Activated CD8-positive, alpha-beta T cell treated with anti-CD3 and anti-CD28 coated beads for 36 hours (primary cell): ENCODE measurements at regions of chr19 and their contacts with region 1.

Region 1: DNA sequence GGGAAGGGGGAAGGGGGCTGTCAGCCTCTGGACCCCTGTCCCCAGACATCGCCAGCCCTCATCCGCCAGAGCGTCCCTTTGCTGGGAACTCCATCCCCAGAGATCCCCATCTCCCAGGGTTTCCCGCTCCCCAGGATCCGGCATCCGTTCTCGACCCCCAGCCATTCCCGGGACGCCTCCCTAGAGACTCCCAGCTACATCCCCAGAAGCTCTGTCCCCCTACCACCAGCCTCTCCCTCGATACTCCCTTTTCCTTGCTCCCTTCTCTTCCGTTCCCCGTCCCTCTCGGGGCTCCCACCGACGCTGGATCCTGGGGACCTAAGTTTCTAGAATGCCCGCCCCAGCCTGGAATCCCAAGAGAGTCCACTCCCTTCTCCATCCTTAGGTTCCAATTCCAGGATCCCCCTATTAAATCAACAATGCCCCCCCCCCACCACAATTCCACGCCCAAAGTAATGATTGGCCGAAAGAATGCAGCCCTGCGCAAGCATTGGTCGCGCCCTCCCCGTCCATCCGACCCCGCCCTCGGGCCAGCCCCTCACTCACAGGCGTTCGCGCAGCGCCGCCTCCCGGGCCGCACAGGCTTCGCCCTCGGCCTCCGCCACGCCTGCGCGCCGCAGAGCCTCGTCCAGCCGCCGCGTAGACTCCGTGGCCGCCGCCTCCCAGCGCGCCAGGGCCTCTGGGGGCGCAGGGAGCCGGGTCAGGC is 3.2 kb downstream of the CCDC194 start:
- DNase-seq: peak; percentile 95
- ATAC-seq: peak; percentile 99
- H3K4me3 Mint-ChIP-seq: peak overlapping the region; percentile 81
- H3K27ac Mint-ChIP-seq: no peak overlapping the region
- H3K4me1 Mint-ChIP-seq: peaks cover 17% of the 10 kb centered on the region
- H3K27me3 Mint-ChIP-seq: peaks cover 5% of the 10 kb centered on the region
- CTCF ChIP-seq: peak; percentile 78

Region 2: GRCh38 chr19:17260842-17261325 is 129.9 kb before region 1 on chr19:
- CTCF ChIA-PET with region 1: interaction called, 13 read pairs
- POLR2A ChIA-PET with region 1: interaction called, 3 read pairs
- intact Hi-C with region 1: no loop called
- DNase-seq: peak; percentile 94
- ATAC-seq: peak; percentile 100
- H3K4me3 Mint-ChIP-seq: no peak overlapping the region
- H3K27ac Mint-ChIP-seq: no peak overlapping the region
- H3K4me1 Mint-ChIP-seq: peaks cover 8% of the 10 kb centered on the region
- H3K27me3 Mint-ChIP-seq: no peaks in the 10 kb centered on the region
- CTCF ChIP-seq: peak; percentile 84

Region 3: GRCh38 chr19:17346109-17346671 is 44.6 kb before region 1 on chr19:
- CTCF ChIA-PET with region 1: interaction called, 18 read pairs
- POLR2A ChIA-PET with region 1: interaction called, 3 read pairs
- intact Hi-C with region 1: loop called (anchors 5 kb)
- DNase-seq: peak; percentile 88
- ATAC-seq: peak; percentile 100
- H3K4me3 Mint-ChIP-seq: no peak overlapping the region
- H3K27ac Mint-ChIP-seq: no peak overlapping the region
- H3K4me1 Mint-ChIP-seq: peaks cover 2% of the 10 kb centered on the region
- H3K27me3 Mint-ChIP-seq: peaks cover 17% of the 10 kb centered on the region
- CTCF ChIP-seq: peak; percentile 95

Region 4: GRCh38 chr19:17405250-17406038 is 14.6 kb after region 1 on chr19 and contains the start of gene BST2:
- CTCF ChIA-PET with region 1: interaction called, 8 read pairs
- POLR2A ChIA-PET with region 1: interaction called, 12 read pairs
- intact Hi-C with region 1: no loop called
- DNase-seq: peak; percentile 72
- ATAC-seq: peak; percentile 77
- H3K4me3 Mint-ChIP-seq: peak within 1 kb of the TSS; percentile 95
- H3K27ac Mint-ChIP-seq: peak within 1 kb of the TSS; percentile 97
- H3K4me1 Mint-ChIP-seq: peaks cover 29% of the 10 kb centered on the region
- H3K27me3 Mint-ChIP-seq: no peaks in the 10 kb centered on the region
- CTCF ChIP-seq: no peak
- total RNA-seq, gene BST2: 89.7 to 98.4 TPM

Region 5: GRCh38 chr19:17469481-17470067 is 78.8 kb after region 1 on chr19:
- CTCF ChIA-PET with region 1: interaction called, 17 read pairs
- POLR2A ChIA-PET with region 1: interaction called, 4 read pairs
- intact Hi-C with region 1: no loop called
- DNase-seq: peak; percentile 96
- ATAC-seq: peak; percentile 86
- H3K4me3 Mint-ChIP-seq: peak overlapping the region; percentile 92
- H3K27ac Mint-ChIP-seq: peak overlapping the region; percentile 94
- H3K4me1 Mint-ChIP-seq: peaks cover 31% of the 10 kb centered on the region
- H3K27me3 Mint-ChIP-seq: no peaks in the 10 kb centered on the region
- CTCF ChIP-seq: no peak

Region 6: DNA sequence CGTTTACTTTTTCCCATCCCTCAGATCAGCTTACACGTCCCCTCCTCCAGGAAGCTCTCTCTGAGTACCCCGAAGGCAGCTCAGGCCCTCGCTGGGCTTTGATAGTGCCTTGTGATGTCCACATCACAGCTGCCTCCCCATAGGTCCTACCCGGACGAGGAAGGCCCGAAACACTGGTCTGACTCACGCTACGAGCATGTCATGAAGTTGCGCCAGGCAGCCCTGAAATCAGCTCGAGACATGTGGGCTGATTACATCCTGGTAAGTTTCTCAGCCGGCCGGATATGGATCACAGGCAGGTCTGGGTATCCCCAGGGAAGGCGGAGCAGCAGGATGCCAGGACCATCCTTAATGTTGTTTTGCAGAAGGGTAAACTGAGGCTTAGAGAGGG is 169.4 kb after region 1 on chr19:
- CTCF ChIA-PET with region 1: no interaction called
- POLR2A ChIA-PET with region 1: no interaction called
- intact Hi-C with region 1: no loop called
- DNase-seq: no peak
- ATAC-seq: no peak
- H3K4me3 Mint-ChIP-seq: no peak overlapping the region
- H3K27ac Mint-ChIP-seq: no peak overlapping the region
- H3K4me1 Mint-ChIP-seq: peaks cover 9% of the 10 kb centered on the region
- H3K27me3 Mint-ChIP-seq: no peaks in the 10 kb centered on the region
- CTCF ChIP-seq: no peak